ENCODE measurements at regions of chr22 and their contacts with region 1.

Region 1: GRCh38 chr22:30754971-30755756 is 60.5 kb downstream of the OSBP2 start:
- DNase-seq: peak in 29 of 35 experiments; percentile 7 to 65 (median 28)
- ATAC-seq: peak; percentile 50 to 75 (median 70)
- H3K4me3 ChIP-seq: no peak overlapping the region
- H3K4me3 Mint-ChIP-seq: no peak overlapping the region
- H3K27ac ChIP-seq: no peak overlapping the region
- H3K27ac Mint-ChIP-seq: no peak overlapping the region
- H3K4me1 ChIP-seq: no peaks in the 10 kb centered on the region
- H3K4me1 Mint-ChIP-seq: peaks cover 0 to 6% (median 0%) of the 10 kb centered on the region in 3 donors
- H3K27me3 ChIP-seq: no peaks in the 10 kb centered on the region
- H3K27me3 Mint-ChIP-seq: peaks cover 0 to 4% of the 10 kb centered on the region in 2 donors

Region 2: DNA sequence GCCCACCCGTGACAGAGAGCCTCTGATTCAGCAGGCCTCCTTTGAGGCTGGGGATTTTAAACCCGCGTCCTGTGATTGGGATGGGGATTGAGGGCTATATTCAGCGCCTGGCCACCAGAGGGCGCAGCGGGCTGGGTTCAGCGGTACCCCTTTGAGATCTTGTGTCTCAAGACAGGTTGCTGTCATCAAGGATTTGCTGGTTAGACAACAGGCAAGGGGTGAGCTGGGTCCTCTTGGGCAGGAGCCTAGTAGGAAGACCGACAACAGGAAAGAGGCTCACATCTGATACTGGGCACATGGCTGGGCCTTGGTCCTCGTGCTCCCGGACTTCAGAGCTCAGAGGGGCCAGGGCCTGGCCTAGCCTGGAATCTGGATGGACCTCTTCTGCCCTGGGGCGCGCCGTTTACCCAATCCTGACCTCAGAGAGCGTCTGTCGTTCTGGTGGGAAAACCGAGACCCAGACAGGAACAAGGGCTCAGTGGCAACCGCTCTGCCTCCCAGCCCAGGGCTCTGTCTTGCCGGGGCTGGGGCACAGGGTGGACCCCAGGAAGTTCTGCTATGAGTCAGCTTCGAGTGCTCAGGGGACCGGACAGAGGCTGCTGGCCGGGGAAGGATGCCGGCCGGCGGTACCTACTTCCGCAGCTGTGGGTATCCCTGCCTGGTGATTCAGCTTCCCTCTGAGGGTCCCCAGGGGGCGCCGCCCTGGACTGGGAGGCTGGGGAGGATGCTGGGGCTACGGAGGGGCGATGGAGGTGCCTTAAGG is 120.5 kb before region 1 on chr22:
- CTCF ChIA-PET with region 1: interaction called, 5 to 26 read pairs
- POLR2A ChIA-PET with region 1: no interaction called
- DNase-seq: peak; percentile 66 to 93 (median 85)
- ATAC-seq: peak; percentile 62 to 68 (median 64)
- H3K4me3 ChIP-seq: peak overlapping the region; percentile 52
- H3K4me3 Mint-ChIP-seq: peak overlapping the region; percentile 75 to 85 (median 75)
- H3K27ac ChIP-seq: peak overlapping the region; percentile 84
- H3K27ac Mint-ChIP-seq: peak overlapping the region; percentile 85 to 90
- H3K4me1 ChIP-seq: peaks cover 6 to 34% of the 10 kb centered on the region in 2 experiments
- H3K4me1 Mint-ChIP-seq: peaks cover 13 to 24% (median 20%) of the 10 kb centered on the region in 3 donors
- H3K27me3 ChIP-seq: no peaks in the 10 kb centered on the region
- H3K27me3 Mint-ChIP-seq: no peaks in the 10 kb centered on the region

Region 3: GRCh38 chr22:30777587-30777986 is 22.4 kb after region 1 on chr22:
- CTCF ChIA-PET with region 1: no interaction called
- POLR2A ChIA-PET with region 1: interaction called in 1 of 2 experiments, 14 read pairs
- DNase-seq: no peak
- ATAC-seq: no peak
- H3K4me3 ChIP-seq: no peak overlapping the region
- H3K4me3 Mint-ChIP-seq: no peak overlapping the region
- H3K27ac ChIP-seq: no peak overlapping the region
- H3K27ac Mint-ChIP-seq: no peak overlapping the region
- H3K4me1 ChIP-seq: no peaks in the 10 kb centered on the region
- H3K4me1 Mint-ChIP-seq: peaks cover 0 to 6% (median 4%) of the 10 kb centered on the region in 3 donors
- H3K27me3 ChIP-seq: peaks cover 0 to 6% of the 10 kb centered on the region in 2 experiments
- H3K27me3 Mint-ChIP-seq: peaks cover 0 to 4% of the 10 kb centered on the region in 2 donors

Measured in T-cell (primary cell).